CD4-positive, alpha-beta T cell (primary cell): ENCODE measurements at regions of chr4 and their contacts with region 1.

Region 1: DNA sequence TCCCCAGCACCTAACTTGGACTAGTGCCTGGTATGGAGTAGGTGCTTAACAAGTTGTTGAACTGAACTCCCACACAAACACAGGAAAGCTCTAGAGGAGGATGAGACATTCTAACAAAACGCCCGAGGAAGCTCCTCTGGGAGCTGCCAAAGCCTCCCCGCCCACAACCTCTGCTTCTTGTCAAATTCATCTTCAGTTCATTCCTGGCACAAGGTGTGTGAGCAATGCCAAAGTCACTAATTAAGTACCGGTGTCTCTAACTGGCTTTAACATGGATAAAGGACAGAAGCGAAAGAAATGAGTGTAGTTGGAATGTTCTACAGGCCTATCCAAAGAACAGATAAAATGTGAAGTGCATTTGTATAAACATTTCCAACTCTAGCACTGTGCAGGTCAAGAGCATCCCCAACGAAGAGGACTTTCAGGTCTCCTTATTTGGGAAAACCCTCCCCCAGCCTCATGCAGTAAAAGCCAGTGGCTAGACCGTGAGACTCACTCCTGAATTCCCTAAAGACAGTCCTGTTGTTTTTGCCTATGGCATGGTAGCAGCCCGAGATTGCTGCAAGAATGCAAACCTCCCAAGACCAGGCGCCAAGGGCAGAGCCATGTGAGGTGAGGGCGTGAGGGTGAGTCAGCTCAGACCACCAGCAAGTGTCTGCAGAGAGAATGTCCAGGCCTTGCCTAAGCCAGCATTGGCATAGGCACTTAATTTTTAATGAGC is 72.2 kb upstream of the KLF3 start:
- DNase-seq: no peak
- ATAC-seq: no peak
- H3K4me3 ChIP-seq: no peak overlapping the region
- H3K4me3 Mint-ChIP-seq: no peak overlapping the region
- H3K27ac ChIP-seq: no peak overlapping the region
- H3K27ac Mint-ChIP-seq: no peak overlapping the region
- H3K4me1 ChIP-seq: no peaks in the 10 kb centered on the region
- H3K4me1 Mint-ChIP-seq: no peaks in the 10 kb centered on the region
- H3K27me3 ChIP-seq: no peaks in the 10 kb centered on the region
- H3K27me3 Mint-ChIP-seq: no peaks in the 10 kb centered on the region
- CTCF ChIP-seq: no peak

Region 2: DNA sequence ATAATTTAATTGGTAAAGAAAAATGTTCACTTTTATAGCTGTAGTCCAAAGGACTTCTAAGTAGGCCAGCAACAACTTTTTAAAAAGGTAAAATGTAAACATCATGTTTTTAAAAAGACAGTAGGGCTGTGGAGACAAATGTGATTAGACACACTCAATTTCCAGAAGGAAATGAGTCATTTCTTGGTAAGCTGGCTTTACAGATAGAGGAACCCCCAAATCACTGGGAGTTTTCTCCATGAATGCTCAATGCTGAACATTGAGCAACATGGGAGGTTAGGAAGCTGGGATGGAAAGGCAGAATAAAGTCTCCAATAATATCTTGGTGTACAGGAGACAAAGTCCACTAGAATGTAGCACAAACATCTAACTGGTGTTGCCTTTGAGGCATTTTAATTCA is 1225.9 kb before region 1 on chr4:
- CTCF ChIA-PET with region 1: no interaction called
- POLR2A ChIA-PET with region 1: no interaction called
- intact Hi-C with region 1: no loop called
- DNase-seq: no peak
- ATAC-seq: no peak
- H3K4me3 ChIP-seq: no peak overlapping the region
- H3K4me3 Mint-ChIP-seq: no peak overlapping the region
- H3K27ac ChIP-seq: no peak overlapping the region
- H3K27ac Mint-ChIP-seq: no peak overlapping the region
- H3K4me1 ChIP-seq: no peaks in the 10 kb centered on the region
- H3K4me1 Mint-ChIP-seq: no peaks in the 10 kb centered on the region
- H3K27me3 ChIP-seq: no peaks in the 10 kb centered on the region
- H3K27me3 Mint-ChIP-seq: peaks cover 29% of the 10 kb centered on the region
- CTCF ChIP-seq: no peak

Region 3: GRCh38 chr4:38639242-38639641 is 47.5 kb after region 1 on chr4:
- CTCF ChIA-PET with region 1: no interaction called
- POLR2A ChIA-PET with region 1: interaction called, 3 read pairs
- intact Hi-C with region 1: loop called in 1 of 2 experiments (anchors 5 kb)
- DNase-seq: no peak
- ATAC-seq: no peak
- H3K4me3 ChIP-seq: no peak overlapping the region
- H3K4me3 Mint-ChIP-seq: no peak overlapping the region
- H3K27ac ChIP-seq: no peak overlapping the region
- H3K27ac Mint-ChIP-seq: no peak overlapping the region
- H3K4me1 ChIP-seq: no peaks in the 10 kb centered on the region
- H3K4me1 Mint-ChIP-seq: no peaks in the 10 kb centered on the region
- H3K27me3 ChIP-seq: no peaks in the 10 kb centered on the region
- H3K27me3 Mint-ChIP-seq: no peaks in the 10 kb centered on the region
- CTCF ChIP-seq: no peak